CD14-positive monocyte (primary cell): ENCODE measurements at regions of chr4 and their contacts with region 1.

Region 1: DNA sequence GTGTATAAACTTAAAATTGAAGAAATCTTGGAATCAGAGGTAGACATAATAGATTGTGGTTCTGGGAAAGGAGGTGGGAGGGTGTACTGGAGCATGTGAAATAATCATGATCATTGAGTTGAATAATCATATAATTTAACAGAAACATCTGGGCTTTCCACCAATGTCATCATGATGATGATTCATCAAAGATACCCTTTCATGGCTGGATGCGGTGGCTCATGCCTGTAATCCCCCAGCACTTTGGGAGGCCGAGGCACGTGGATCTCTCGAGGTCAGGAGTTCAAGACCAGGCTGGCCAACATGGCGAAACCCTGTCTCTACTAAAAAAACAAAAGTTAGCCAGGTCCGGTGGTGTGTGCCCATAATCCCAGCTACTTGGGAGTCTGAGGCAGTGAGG is 6.7 kb upstream of the RUFY3 start:
- DNase-seq: peak; percentile 73 to 95 (median 74)
- H3K4me3 ChIP-seq: peak overlapping the region in 1 of 3 experiments; percentile 67
- H3K4me3 Mint-ChIP-seq: peak overlapping the region; percentile 59 to 81
- H3K27ac ChIP-seq: peak overlapping the region; percentile 92 to 94
- H3K27ac Mint-ChIP-seq: peak overlapping the region; percentile 93 to 99 (median 98)
- H3K4me1 ChIP-seq: peaks cover 60 to 71% of the 10 kb centered on the region in 2 donors
- H3K4me1 Mint-ChIP-seq: peaks cover 72% of the 10 kb centered on the region
- H3K27me3 ChIP-seq: no peaks in the 10 kb centered on the region
- H3K27me3 Mint-ChIP-seq: no peaks in the 10 kb centered on the region
- CTCF ChIP-seq: no peak

Region 2: DNA sequence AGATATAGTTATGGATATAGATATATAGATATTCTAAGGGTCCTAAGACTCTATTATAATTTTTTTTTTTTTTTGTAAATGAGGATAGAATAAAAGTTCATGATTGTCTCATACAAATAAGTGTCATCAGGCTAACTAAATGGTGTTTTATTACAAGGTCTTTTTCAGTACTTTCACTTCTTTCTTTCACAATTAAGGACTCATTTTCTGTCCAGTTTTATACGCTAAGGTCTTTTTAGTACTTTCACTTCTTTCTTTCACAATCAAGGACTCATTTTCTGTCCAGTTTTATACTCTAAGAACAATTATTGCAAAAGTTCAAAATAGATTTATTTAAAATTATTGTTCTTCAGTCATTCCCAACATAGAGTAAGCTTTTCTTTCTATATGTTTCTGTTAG is 39.4 kb after region 1 on chr4:
- intact Hi-C with region 1: loop called in 1 of 2 experiments (anchors 5 kb)
- DNase-seq: peak; percentile 42 to 70 (median 66)
- H3K4me3 ChIP-seq: peak overlapping the region in 2 of 3 experiments; percentile 31 to 48
- H3K4me3 Mint-ChIP-seq: peak overlapping the region; percentile 34 to 72
- H3K27ac ChIP-seq: peak overlapping the region; percentile 76 to 78
- H3K27ac Mint-ChIP-seq: peak overlapping the region; percentile 78 to 95 (median 94)
- H3K4me1 ChIP-seq: peaks cover 20 to 27% of the 10 kb centered on the region in 2 donors
- H3K4me1 Mint-ChIP-seq: peaks cover 39% of the 10 kb centered on the region
- H3K27me3 ChIP-seq: no peaks in the 10 kb centered on the region
- H3K27me3 Mint-ChIP-seq: no peaks in the 10 kb centered on the region
- CTCF ChIP-seq: no peak